Uterus (tissue), 4 donors: ENCODE measurements at regions of chr6 and their contacts with region 1.

Region 1: GRCh38 chr6:83067448-83068413 is at the start of gene DOP1A:
- DNase-seq: peak; percentile 93 to 95
- H3K4me3 ChIP-seq: peak within 1 kb of the TSS; percentile 49 to 95
- H3K27ac ChIP-seq: peak within 1 kb of the TSS; percentile 63 to 87
- H3K4me1 ChIP-seq: no peaks in the 10 kb centered on the region
- H3K27me3 ChIP-seq: no peaks in the 10 kb centered on the region
- CTCF ChIP-seq: peak; percentile 92 to 99 (median 96)
- POLR2A ChIP-seq: peak; percentile 35 to 62
- total RNA-seq, gene DOP1A: 12.9 to 88.8 (median 31.7) TPM

Region 2: DNA sequence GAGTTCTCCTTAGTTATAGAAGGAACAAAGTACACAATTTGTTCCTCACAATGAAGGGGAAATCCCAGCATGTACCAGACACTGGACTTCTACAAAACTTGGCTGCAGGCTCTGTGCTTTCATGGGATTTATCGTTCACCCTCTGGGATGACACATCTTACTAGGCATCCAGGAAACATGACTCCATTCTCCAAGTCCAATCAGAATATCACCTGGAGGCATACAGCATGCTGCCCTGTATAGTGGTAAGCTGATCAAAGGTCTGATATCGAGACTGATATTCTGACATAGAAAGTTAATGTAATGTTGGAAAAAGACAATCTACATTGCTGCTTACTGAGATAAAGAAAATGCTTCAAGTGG is 132.1 kb after region 1 on chr6:
- intact Hi-C with region 1: loop called (anchors 10 kb)
- DNase-seq: no peak
- H3K4me3 ChIP-seq: no peak overlapping the region
- H3K27ac ChIP-seq: no peak overlapping the region
- H3K4me1 ChIP-seq: no peaks in the 10 kb centered on the region
- H3K27me3 ChIP-seq: no peaks in the 10 kb centered on the region
- CTCF ChIP-seq: no peak
- POLR2A ChIP-seq: no peak